CD8-positive, alpha-beta T cell (primary cell): ENCODE measurements at regions of chr1 and their contacts with region 1.

Region 1: DNA sequence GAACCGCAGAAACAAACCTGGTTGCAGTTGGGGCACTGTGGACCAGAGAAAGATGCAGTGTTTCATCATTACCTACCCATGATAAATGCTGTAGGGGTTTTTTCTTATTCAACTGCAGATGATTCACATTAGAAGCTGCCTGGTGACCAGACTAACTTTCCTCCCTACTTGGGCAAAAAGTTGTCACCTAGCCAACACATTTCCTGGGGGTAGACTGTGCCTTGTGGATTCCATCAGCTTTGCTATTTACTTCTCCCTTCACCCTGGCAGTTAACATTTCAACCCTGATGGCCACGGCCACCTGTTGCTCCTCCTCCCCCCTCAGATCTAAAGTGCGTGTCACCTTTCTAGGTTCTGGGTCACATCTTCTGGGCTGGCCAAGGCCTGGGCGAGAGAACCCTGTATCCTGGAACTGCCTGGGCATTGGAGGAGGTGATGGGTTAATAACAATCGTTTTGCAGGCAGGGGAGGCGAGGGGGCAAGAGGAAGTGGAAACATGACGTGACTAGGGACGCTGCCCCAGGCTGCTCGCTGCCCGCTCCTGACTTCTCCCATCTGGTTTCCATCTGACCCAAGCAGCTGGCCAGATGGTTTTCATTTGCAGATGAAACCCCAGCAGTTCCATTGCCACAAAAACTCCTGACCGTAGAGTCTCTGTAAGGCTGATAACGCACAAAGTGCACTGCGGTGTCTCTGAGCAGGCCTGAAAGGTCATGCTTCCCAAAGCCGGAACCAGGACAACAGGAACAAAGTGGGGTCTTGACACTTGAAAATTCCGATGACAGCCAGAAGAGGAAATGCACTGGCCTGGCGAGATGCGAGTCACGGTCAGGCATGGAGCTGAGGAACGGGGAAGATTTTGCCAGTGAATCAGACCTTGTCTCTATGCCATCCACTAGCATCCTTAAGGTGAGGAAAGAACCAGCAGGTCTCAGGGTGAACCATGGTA is 36.6 kb downstream of the CAPZB start:
- DNase-seq: peak in 3 of 9 experiments; percentile 27 to 43 (median 27)
- ATAC-seq: peak; percentile 45
- H3K4me3 ChIP-seq: no peak overlapping the region
- H3K4me3 Mint-ChIP-seq: peak overlapping the region; percentile 1
- H3K27ac ChIP-seq: peak overlapping the region in 1 of 2 experiments; percentile 38
- H3K27ac Mint-ChIP-seq: peak overlapping the region; percentile 88
- H3K4me1 ChIP-seq: peaks cover 86% of the 10 kb centered on the region
- H3K4me1 Mint-ChIP-seq: peaks cover 88% of the 10 kb centered on the region
- H3K27me3 ChIP-seq: no peaks in the 10 kb centered on the region
- H3K27me3 Mint-ChIP-seq: no peaks in the 10 kb centered on the region
- CTCF ChIP-seq: no peak

Region 2: GRCh38 chr1:19462781-19463503 is 14.2 kb after region 1 on chr1:
- CTCF ChIA-PET with region 1: interaction called, 6 read pairs
- POLR2A ChIA-PET with region 1: interaction called, 5 read pairs
- intact Hi-C with region 1: loop called in 1 of 2 experiments (anchors 2 kb)
- DNase-seq: peak; percentile 55 to 90 (median 73)
- ATAC-seq: peak; percentile 76
- H3K4me3 ChIP-seq: peak overlapping the region; percentile 6 to 43
- H3K4me3 Mint-ChIP-seq: peak overlapping the region; percentile 80
- H3K27ac ChIP-seq: peak overlapping the region; percentile 71 to 78
- H3K27ac Mint-ChIP-seq: peak overlapping the region; percentile 96
- H3K4me1 ChIP-seq: peaks cover 98% of the 10 kb centered on the region
- H3K4me1 Mint-ChIP-seq: peaks cover 87% of the 10 kb centered on the region
- H3K27me3 ChIP-seq: no peaks in the 10 kb centered on the region
- H3K27me3 Mint-ChIP-seq: no peaks in the 10 kb centered on the region
- CTCF ChIP-seq: no peak

Region 3: DNA sequence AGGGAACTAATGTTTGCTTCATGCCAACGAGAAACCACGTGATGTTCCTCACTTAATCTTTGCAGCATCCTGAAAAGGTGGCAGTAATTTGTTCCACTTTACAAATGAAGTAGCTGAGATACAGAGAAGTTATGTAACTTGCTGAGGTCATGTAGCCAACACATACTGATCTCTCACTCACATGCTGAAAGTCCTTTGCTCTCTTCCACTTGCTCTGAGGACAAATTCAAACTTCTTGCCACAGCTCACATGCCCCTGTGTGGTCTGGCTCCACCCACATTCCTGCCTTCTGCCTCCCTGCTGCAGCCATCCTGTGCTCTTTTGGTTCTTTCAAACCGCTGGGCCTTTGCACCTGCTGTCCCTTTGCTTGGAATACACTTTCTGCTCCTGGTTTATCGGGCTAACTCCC is 295.6 kb after region 1 on chr1:
- CTCF ChIA-PET with region 1: no interaction called
- POLR2A ChIA-PET with region 1: no interaction called
- intact Hi-C with region 1: no loop called
- DNase-seq: no peak
- ATAC-seq: no peak
- H3K4me3 ChIP-seq: no peak overlapping the region
- H3K4me3 Mint-ChIP-seq: no peak overlapping the region
- H3K27ac ChIP-seq: no peak overlapping the region
- H3K27ac Mint-ChIP-seq: no peak overlapping the region
- H3K4me1 ChIP-seq: no peaks in the 10 kb centered on the region
- H3K4me1 Mint-ChIP-seq: no peaks in the 10 kb centered on the region
- H3K27me3 ChIP-seq: no peaks in the 10 kb centered on the region
- H3K27me3 Mint-ChIP-seq: no peaks in the 10 kb centered on the region
- CTCF ChIP-seq: no peak